ENCODE measurements at regions of chr16 and their contacts with region 1.

Region 1: DNA sequence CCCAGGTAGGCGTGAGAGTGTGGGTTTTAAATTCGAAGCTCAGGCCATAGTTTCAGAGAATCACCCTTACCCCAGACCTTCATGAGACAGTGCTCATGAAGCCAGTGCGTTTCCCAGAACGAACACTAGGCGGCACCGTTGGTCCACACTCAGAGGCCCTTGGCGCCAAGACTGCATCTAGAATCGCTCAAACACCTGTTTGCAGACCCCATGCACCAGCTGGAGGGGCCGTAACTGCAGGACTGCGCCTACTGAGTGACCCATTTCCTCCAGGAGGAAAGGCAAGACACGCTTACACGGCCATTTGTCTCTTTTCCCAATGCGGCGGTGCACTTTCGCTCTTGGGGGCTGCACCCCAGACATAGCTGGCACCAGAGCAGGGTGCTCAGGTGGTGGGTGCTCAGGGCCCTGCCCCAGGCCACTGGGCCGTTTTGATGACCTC is 34.0 kb downstream of the ADGRG5 start:
- DNase-seq: peak; percentile 69
- H3K4me3 Mint-ChIP-seq: no peak overlapping the region
- H3K27ac Mint-ChIP-seq: peak overlapping the region; percentile 25
- H3K4me1 Mint-ChIP-seq: peaks cover 47% of the 10 kb centered on the region
- H3K27me3 Mint-ChIP-seq: peaks cover 2% of the 10 kb centered on the region

Region 2: GRCh38 chr16:57609541-57610401 is 33.3 kb after region 1 on chr16:
- intact Hi-C with region 1: loop called (anchors 1 kb)
- DNase-seq: peak; percentile 74
- H3K4me3 Mint-ChIP-seq: peak overlapping the region; percentile 58
- H3K27ac Mint-ChIP-seq: peak overlapping the region; percentile 87
- H3K4me1 Mint-ChIP-seq: peaks cover 60% of the 10 kb centered on the region
- H3K27me3 Mint-ChIP-seq: no peaks in the 10 kb centered on the region

Region 3: GRCh38 chr16:57720142-57720575 is 143.7 kb after region 1 on chr16:
- intact Hi-C with region 1: loop called (anchors 2 kb)
- DNase-seq: peak; percentile 33
- H3K4me3 Mint-ChIP-seq: no peak overlapping the region
- H3K27ac Mint-ChIP-seq: no peak overlapping the region
- H3K4me1 Mint-ChIP-seq: no peaks in the 10 kb centered on the region
- H3K27me3 Mint-ChIP-seq: peaks cover 2% of the 10 kb centered on the region

Region 4: DNA sequence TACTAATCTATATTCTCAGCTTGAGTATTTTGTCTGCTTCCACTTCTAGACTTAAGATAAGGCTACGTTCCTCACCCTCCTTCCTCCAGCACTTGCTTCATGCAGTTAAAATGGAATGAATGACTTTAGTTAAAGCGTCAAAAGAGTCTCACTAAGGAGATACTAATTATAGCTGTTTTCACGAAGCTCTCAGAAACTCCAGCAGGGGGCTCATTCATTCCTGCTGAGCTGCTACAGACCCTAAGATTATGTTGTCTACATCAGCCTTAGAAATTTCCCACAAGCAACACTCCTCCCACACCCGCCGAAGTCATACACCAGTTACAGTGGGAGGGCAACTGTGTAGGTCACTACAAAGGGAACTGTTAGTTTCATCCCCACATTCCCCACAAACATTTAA is 282.9 kb after region 1 on chr16:
- intact Hi-C with region 1: no loop called
- DNase-seq: no peak
- H3K4me3 Mint-ChIP-seq: no peak overlapping the region
- H3K27ac Mint-ChIP-seq: no peak overlapping the region
- H3K4me1 Mint-ChIP-seq: no peaks in the 10 kb centered on the region
- H3K27me3 Mint-ChIP-seq: peaks cover 15% of the 10 kb centered on the region

Region 5: DNA sequence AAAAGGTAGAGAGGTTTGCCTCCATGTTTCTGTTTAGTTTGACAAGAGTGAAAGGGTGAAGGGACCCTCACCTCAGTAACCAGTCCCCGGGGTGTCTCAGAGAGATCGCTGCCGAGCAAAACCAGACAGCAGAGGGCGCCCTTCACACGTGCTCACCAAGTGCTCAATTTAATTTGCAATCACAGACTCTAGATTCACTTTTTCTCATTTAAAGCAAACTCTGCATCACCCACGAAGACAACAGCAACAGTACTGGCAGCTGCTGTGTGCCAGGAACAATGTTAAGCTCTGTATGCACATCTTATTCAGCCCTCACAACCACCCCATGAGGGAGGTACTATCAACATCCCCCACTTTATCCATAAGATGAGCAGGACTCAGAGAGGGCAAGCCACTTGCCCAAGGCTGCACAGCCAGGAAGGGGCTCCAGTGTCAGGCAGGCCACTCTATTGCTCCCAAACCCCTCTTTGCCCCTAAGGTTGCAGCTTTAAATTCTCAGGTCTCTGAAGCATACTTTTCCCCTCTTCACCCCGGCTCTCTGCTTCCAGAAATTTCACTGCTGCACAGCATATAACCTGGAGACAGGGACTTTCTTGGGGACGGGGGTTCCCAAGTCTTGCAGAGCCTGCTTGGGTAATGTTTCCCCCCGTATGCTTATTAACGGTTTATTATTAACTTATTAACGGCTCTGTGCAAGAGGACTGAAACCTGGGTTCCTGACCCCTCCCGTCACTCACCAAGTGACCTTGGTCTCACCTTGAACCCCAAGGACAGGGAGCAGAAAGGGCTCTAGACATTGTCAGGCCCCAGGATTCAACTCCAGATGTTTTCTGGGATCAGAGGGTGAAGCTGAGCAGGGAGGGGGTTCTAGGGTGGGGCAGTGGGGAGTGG is 323.6 kb after region 1 on chr16:
- intact Hi-C with region 1: loop called (anchors 10 kb)
- DNase-seq: peak; percentile 64
- H3K4me3 Mint-ChIP-seq: no peak overlapping the region
- H3K27ac Mint-ChIP-seq: no peak overlapping the region
- H3K4me1 Mint-ChIP-seq: no peaks in the 10 kb centered on the region
- H3K27me3 Mint-ChIP-seq: peaks cover 7% of the 10 kb centered on the region

Measured in activated T-helper 2 cell treated with anti-CD3 and anti-CD28 coated beads, Interferon-gamma antibody, Interleukin-2, Interleukin-4, amounts not matched to agents 10 μg/mL and 5 μg/mL and 100 μg/mL, durations not matched to agents 14 hours and 24 hours and 36 hours (primary cell).